Heart left ventricle (tissue), 16 donors: ENCODE measurements at regions of chr18 and their contacts with region 1.

Region 1: GRCh38 chr18:7575157-7576028 is 8.3 kb downstream of the PTPRM start:
- DNase-seq: peak in 2 of 5 donors; percentile 42 to 52
- ATAC-seq: peak; percentile 51 to 88 (median 72)
- H3K4me3 ChIP-seq: no peak overlapping the region
- H3K27ac ChIP-seq: peak overlapping the region in 3 of 12 donors; percentile 13 to 51 (median 25)
- H3K4me1 ChIP-seq: peaks cover 4 to 84% (median 53%) of the 10 kb centered on the region in 12 donors
- H3K27me3 ChIP-seq: no peaks in the 10 kb centered on the region
- CTCF ChIP-seq: peak in 9 of 12 donors; percentile 12 to 50 (median 25)
- POLR2A ChIP-seq: no peak

Region 2: DNA sequence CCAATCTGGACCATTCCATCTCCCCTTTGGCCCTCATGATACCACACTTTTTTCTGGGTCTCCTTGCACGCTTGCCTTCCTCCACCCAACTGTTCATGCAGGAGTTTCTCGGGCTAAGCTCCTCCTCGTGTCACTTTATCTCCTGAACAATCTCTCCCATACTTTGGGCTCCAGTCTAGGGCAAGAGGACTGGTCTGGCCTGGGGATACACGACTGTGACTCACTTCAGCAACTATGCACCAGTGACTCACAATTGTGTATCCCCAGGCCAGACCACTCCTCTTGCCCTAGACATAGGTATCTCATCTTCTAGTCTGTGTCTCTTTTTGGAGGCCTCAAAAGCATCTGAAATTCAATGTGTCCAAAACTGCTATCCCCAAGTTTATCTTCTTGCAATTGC is 157.7 kb before region 1 on chr18:
- intact Hi-C with region 1: no loop called
- DNase-seq: no peak
- ATAC-seq: no peak
- H3K4me3 ChIP-seq: no peak overlapping the region
- H3K27ac ChIP-seq: no peak overlapping the region
- H3K4me1 ChIP-seq: peaks cover 0 to 18% (median 7%) of the 10 kb centered on the region in 12 donors
- H3K27me3 ChIP-seq: no peaks in the 10 kb centered on the region
- CTCF ChIP-seq: no peak
- POLR2A ChIP-seq: no peak

Region 3: DNA sequence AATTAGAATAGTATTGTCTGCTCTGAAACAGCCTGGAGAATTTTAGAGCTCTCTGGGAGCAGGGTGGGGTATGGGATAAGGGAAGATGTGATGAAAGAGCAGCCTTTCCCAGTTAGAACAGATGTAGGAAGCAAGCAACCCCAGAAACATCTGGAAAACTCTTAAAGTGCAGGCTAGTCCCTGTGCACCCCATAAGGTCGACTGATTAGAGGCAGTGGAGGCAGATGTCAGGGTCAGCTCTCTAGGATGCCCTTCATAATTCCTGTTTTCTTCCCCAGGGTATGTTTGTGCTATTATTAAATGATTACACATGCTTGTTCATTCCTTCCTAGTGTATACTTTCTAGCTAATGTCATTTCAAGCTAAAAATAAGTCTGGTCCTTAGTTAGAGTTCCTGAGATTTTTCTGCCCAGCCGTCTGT is 33.4 kb after region 1 on chr18:
- intact Hi-C with region 1: loop called in 2 of 10 experiments (anchors 2 to 5 kb)
- DNase-seq: peak in 3 of 5 donors; percentile 36 to 50 (median 39)
- ATAC-seq: peak; percentile 75 to 88 (median 80)
- H3K4me3 ChIP-seq: no peak overlapping the region
- H3K27ac ChIP-seq: peak overlapping the region; percentile 77 to 94 (median 87)
- H3K4me1 ChIP-seq: peaks cover 3 to 96% (median 64%) of the 10 kb centered on the region in 12 donors
- H3K27me3 ChIP-seq: no peaks in the 10 kb centered on the region
- CTCF ChIP-seq: no peak
- POLR2A ChIP-seq: no peak

Region 4: GRCh38 chr18:7749510-7749981 is 174.2 kb after region 1 on chr18:
- intact Hi-C with region 1: loop called in 4 of 10 experiments (anchors 10 kb)
- DNase-seq: no peak
- ATAC-seq: peak; percentile 58 to 73 (median 68)
- H3K4me3 ChIP-seq: no peak overlapping the region
- H3K27ac ChIP-seq: peak overlapping the region in 10 of 12 donors; percentile 6 to 62 (median 42)
- H3K4me1 ChIP-seq: peaks cover 3 to 77% (median 58%) of the 10 kb centered on the region in 12 donors
- H3K27me3 ChIP-seq: no peaks in the 10 kb centered on the region
- CTCF ChIP-seq: no peak
- POLR2A ChIP-seq: no peak

Region 5: GRCh38 chr18:7872569-7872968 is 297.2 kb after region 1 on chr18:
- intact Hi-C with region 1: loop called in 1 of 10 experiments (anchors 10 kb)
- DNase-seq: no peak
- ATAC-seq: peak; percentile 68 to 93 (median 84)
- H3K4me3 ChIP-seq: no peak overlapping the region
- H3K27ac ChIP-seq: peak overlapping the region in 1 of 12 donors; percentile 7
- H3K4me1 ChIP-seq: peaks cover 0 to 40% (median 20%) of the 10 kb centered on the region in 12 donors
- H3K27me3 ChIP-seq: no peaks in the 10 kb centered on the region
- CTCF ChIP-seq: peak in 4 of 12 donors; percentile 10 to 37 (median 31)
- POLR2A ChIP-seq: no peak

Region 6: DNA sequence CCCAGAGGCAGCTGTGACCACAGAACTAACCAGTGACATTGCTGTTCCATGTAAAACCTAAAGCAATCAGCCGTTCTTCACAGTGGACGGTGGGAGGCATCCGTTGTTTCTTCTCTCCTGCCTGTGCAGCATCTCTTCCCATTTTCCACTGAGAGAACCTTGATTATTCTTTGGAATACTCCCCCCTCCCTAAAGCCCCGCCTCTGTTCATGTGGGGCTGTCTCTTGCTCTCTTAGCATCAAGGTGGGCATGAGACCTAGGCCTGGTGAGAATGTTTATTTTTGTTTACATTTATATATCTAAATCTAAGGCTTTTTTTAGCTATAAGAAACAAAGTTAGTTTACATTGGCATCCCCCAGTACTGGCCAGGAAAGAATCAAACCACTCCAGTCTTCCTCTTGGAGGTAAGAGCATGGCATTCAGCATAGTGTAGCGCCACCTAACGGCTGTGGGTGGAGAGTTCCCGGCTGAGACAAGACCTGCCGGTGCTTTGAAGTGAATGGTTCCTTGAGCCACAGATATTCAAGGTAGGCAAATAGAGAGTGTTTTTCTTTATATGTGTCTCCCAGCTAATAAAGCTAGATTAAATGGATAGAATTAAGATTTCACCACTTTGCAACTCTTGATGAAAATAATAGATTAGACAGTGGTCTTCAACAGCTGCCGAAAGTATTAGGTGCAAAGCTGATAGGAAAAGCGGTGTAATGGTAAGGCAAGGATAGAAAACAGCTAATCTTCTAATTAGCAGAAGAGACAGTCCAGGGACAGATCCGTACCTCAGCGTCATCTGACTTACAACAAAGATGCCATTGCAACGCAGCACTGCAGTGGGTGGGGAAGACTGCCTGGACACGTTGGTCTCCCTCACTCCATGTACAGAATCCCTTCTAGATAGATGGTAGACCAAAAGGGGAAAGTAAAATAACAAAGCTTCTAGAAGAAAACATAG is 814.3 kb after region 1 on chr18:
- intact Hi-C with region 1: loop called in 1 of 10 experiments (anchors 10 kb)
- DNase-seq: peak in 4 of 5 donors; percentile 47 to 67 (median 60)
- ATAC-seq: peak; percentile 81 to 92 (median 84)
- H3K4me3 ChIP-seq: no peak overlapping the region
- H3K27ac ChIP-seq: no peak overlapping the region
- H3K4me1 ChIP-seq: peaks cover 0 to 4% (median 0%) of the 10 kb centered on the region in 12 donors
- H3K27me3 ChIP-seq: no peaks in the 10 kb centered on the region
- CTCF ChIP-seq: peak; percentile 56 to 84 (median 76)
- POLR2A ChIP-seq: no peak